ENCODE measurements at regions of chr4 and their contacts with region 1.

Region 1: DNA sequence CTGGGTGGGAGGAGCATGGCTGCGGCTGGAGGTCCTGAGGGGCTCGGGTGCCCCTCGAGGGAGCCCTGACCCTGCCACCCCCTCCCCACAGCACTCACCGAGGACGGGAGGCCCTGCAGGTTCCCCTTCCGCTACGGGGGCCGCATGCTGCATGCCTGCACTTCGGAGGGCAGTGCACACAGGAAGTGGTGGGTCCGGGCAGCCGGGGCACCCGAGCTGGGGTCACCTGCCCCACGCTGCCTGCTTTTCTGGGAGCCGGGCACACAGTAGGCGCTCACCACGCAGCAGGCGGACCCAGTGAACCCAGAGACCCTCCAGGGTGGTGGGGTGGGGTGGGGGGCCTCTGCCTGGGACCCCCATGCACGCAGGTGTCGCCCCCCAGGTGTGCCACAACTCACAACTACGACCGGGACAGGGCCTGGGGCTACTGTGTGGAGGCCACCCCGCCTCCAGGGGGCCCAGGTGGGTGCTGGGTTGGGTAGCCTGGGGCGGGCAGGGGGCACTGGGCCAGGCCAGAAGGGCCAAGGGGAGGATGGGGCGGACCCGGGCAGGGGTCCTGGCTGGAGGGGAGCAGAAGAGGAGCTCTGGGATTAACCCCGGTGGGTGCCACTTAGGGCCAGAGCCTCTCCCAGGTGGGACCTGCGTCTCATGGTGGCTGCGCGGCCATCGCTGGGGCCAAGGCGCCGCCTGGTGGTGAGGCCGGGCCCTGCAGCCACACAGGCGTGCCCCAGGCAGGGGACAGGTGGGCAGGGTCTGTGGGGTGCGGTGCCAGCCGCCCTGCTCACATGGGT is 1.4 kb downstream of the HGFAC start:
- DNase-seq: peak; percentile 74
- H3K4me3 Mint-ChIP-seq: no peak overlapping the region
- H3K27ac Mint-ChIP-seq: no peak overlapping the region
- H3K4me1 Mint-ChIP-seq: no peaks in the 10 kb centered on the region
- H3K27me3 Mint-ChIP-seq: no peaks in the 10 kb centered on the region

Region 2: DNA sequence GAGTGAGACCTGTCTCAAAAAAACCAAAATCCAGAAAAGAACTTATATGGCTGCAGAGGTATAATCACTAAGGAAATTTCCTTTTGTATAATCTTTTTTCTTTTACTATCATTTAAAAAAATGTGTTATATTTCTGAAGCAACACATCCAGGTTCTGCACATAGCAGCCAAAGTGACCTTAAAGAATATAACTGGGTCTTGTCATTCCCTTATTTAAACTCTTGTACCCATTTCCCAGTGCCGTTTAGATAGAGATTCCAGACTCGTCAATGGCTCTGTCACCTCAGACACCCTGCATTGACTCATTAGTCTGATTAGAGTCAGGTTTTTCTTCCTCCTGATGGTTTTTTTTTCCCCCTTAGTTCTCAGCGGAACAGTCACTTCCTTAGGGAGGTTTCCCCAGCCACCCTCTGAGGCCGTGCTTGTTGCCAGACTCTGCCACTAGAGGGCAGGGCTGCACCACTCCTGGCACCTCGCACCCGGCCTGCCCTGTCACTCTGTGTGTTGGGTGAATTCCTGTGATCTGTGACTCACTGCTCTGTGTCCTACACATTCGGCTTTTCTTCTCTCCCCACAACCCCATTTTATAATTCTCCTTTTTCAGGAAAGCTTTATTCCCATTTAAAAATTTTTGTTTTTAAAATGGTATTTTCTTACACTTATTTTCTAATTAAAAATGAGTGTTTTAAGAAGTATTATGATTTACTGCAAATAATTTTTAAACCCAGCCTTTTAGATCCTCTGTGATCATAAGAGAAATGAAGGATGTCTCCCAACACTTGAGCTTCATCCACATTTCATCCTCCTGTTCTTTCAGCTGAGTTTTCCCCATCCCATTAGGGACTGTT is 336.6 kb before region 1 on chr4:
- CTCF ChIA-PET with region 1: interaction called, 15 read pairs
- DNase-seq: peak; percentile 87
- H3K4me3 Mint-ChIP-seq: no peak overlapping the region
- H3K27ac Mint-ChIP-seq: no peak overlapping the region
- H3K4me1 Mint-ChIP-seq: peaks cover 4% of the 10 kb centered on the region
- H3K27me3 Mint-ChIP-seq: no peaks in the 10 kb centered on the region

Region 3: DNA sequence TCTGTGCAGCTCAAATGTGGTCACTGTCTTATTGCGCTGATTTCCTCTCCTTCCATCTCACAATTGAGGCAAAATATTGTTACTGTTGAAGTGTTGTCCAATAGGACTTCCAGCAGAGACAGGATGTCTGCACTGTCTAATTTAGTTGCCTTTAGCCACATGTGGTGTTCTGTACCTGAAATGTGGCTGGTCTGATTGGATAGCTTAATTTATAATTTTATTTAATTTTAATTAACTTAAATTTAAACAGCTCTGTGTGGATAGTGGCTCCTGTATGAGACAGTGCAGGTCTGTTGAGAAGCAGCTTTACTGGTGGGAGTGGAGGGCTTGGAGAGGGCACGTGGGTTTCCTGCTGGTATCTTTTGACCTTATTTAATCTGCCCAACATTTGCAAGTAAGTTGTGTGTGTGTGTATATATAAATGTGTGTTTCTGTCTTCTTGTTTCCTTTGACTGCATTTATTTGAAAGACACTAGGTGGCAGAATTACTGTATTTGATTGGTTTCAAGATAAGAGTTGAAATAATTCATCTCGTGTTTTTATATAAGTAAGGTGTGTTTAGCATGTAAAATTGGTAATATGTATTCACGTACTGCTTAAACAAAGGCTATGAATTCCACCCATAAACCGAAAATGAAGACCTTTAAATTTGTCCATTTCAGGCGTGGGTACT is 249.5 kb before region 1 on chr4:
- CTCF ChIA-PET with region 1: interaction called, 11 read pairs
- DNase-seq: no peak
- H3K4me3 Mint-ChIP-seq: no peak overlapping the region
- H3K27ac Mint-ChIP-seq: peak overlapping the region; percentile 26
- H3K4me1 Mint-ChIP-seq: peaks cover 68% of the 10 kb centered on the region
- H3K27me3 Mint-ChIP-seq: no peaks in the 10 kb centered on the region

Region 4: DNA sequence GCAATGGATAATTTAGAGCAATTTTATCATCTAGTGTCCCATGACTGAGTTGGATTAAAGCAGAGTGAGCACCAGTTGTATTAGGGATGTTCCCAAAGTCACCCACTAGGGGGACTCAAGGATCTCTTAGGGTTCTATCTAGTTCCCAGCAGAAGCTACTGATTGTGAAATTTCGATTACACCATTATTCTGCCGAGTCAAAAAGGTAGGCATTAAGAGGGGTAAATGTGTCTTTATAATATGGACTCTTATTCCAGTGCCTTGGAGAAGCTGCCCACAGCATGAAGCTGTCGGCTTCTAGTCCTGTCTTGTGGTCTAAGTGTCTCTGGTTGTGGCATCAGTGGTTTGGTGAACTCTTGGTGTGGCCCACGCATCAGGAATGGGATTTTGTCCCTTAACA is 97.0 kb before region 1 on chr4:
- CTCF ChIA-PET with region 1: interaction called, 17 read pairs
- DNase-seq: peak; percentile 59
- H3K4me3 Mint-ChIP-seq: no peak overlapping the region
- H3K27ac Mint-ChIP-seq: no peak overlapping the region
- H3K4me1 Mint-ChIP-seq: peaks cover 16% of the 10 kb centered on the region
- H3K27me3 Mint-ChIP-seq: peaks cover 3% of the 10 kb centered on the region

Region 5: DNA sequence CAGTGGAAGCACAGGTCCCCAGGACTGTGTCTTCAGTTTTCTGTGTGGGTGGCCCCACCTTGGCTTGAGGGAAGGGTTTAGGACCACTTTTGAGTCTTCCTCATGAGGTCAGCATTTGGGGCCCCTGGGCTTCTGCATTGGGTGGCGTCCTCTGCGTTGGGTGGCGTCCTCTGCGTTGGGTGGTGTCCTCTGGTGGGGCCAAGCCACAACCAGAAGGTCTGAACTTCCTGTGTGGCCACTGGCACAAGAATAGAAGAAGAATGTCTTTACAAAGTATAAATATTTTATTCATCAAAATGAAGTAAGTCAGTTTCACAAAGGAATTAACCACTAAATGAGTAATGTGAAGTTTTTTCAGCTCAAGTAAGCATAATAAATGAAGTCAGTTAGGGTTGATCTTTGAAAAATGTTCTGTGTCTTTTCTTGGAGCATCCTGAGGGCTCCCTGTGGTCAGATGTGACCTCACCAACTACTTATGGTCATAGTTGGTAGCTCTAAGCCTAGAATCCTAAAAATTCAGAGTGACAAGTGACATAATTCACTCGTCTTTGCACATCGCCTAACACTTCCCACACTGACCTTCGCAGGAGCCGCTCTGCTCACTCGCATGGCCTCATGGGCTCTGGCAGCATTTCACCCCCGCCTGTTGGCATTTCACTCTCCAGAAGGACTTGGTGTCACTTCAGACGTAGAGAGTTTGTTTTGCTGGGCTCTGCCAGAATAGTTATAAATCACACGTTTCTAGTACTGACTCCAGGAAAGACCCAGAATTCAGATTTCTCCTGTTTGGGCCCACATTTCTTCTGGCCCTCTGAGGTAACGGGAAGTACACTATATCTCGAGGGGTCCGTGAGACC is 40.4 kb before region 1 on chr4:
- CTCF ChIA-PET with region 1: no interaction called
- DNase-seq: no peak
- H3K4me3 Mint-ChIP-seq: no peak overlapping the region
- H3K27ac Mint-ChIP-seq: no peak overlapping the region
- H3K4me1 Mint-ChIP-seq: no peaks in the 10 kb centered on the region
- H3K27me3 Mint-ChIP-seq: no peaks in the 10 kb centered on the region